Activated CD4-positive, alpha-beta memory T cell treated with anti-CD3 and anti-CD28 coated beads, Interleukin-2, amount 10 ng/mL, durations not matched to agents 7 days and 5 days (primary cell): ENCODE measurements at regions of chr3 and their contacts with region 1.

Region 1: GRCh38 chr3:153161138-153161713 is 800 bp upstream of the RAP2B start:
- DNase-seq: peak; percentile 95
- H3K4me3 Mint-ChIP-seq: peak overlapping the region; percentile 99
- H3K27ac Mint-ChIP-seq: peak overlapping the region; percentile 99
- H3K4me1 Mint-ChIP-seq: peaks cover 32% of the 10 kb centered on the region
- H3K27me3 Mint-ChIP-seq: no peaks in the 10 kb centered on the region

Region 2: DNA sequence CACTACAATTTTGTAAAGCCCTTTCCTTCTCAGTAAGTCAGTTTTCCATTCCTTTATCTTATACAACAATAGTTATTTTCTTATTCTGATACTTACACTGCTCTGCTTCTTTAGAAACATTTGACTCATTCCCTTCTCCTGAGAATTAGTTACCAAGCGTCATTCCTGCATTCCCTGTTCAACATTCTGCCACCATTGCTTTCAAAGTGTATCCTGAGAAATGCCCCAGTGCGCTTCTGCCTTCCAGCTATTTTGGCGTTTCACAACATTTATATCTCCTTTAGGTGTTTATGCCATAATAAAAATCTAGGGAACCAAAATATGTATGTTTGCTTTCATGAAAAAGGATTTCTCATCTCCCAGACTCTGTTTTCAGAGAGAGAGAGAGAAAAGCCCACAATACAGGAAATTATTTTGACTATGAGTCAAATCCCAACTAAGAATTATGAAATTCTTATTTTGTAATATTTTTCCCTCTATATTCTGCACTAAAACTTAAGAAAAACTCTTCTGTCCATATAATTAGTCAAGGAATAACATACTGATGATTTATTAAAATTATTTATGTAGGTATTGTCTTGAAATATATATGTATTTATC is 117.4 kb before region 1 on chr3:
- CTCF ChIA-PET with region 1: interaction called, 28 read pairs
- POLR2A ChIA-PET with region 1: interaction called, 14 read pairs
- DNase-seq: no peak
- H3K4me3 Mint-ChIP-seq: no peak overlapping the region
- H3K27ac Mint-ChIP-seq: no peak overlapping the region
- H3K4me1 Mint-ChIP-seq: peaks cover 11% of the 10 kb centered on the region
- H3K27me3 Mint-ChIP-seq: peaks cover 2% of the 10 kb centered on the region

Region 3: DNA sequence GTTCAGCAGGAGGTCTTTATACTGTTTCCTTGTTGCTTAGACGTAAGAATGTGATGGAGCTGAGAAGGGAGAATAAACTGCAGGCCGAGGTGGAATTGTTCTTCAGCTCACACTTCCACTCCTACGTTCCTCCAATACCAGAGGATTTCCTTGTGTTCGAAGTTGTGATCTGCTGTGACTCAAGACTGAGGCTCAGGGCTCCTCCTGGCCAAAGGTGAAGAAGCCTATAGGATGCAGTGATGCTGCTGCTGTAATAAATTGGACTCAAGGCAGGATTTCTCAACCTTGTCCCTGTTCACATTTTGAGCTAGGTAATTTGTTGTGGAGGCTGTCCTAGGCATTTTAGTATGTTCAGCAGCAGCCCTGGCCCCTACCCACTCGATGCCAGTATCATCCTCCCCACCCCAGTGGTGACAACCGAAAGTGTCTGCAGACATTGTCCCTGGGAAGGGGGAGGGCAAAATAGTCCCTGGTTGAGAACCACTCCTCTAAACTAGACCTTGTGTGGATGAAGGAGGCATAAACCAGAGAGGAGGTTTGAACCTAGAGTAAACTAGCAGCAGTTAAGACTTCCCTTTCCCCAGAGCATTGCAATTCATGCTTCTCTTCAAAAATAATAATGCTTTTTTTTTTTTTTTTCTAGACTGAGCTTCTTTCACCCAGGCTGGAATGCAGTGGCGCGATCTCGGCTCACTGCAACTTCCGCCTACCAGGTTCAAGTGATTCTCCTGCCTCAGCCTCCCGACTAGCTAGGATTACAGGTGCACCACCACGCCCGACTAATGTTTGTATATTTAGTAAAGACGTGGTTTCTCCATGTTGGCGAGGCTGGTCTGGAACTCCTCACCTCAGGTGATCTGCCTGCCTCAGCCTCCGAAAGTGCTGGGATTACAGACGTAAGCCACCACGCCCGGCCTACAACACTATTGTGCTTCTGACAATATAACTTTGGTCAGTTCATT is 11.9 kb after region 1 on chr3:
- CTCF ChIA-PET with region 1: interaction called, 7 read pairs
- POLR2A ChIA-PET with region 1: interaction called, 24 read pairs
- DNase-seq: no peak
- H3K4me3 Mint-ChIP-seq: no peak overlapping the region
- H3K27ac Mint-ChIP-seq: no peak overlapping the region
- H3K4me1 Mint-ChIP-seq: peaks cover 28% of the 10 kb centered on the region
- H3K27me3 Mint-ChIP-seq: no peaks in the 10 kb centered on the region

Region 4: DNA sequence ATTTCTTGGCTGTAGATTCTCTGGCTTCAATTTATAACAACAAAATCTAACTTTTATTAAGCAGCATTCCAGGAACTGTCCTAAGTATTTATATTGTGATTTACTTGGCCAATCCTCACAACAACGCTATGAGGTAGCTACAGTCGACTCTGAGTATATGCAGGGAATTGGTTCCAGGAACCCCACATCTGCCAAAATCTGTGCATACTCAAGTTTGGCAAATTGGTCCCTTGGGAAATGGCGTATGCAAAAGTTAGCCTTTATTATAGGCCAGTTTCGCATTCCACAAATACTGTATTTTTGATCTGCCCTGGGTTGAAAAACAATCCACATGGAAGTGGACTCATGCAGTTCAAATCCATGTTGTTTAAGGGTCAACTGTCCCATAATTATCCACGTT is 54.7 kb after region 1 on chr3:
- CTCF ChIA-PET with region 1: interaction called, 21 read pairs
- POLR2A ChIA-PET with region 1: interaction called, 134 read pairs
- DNase-seq: no peak
- H3K4me3 Mint-ChIP-seq: no peak overlapping the region
- H3K27ac Mint-ChIP-seq: no peak overlapping the region
- H3K4me1 Mint-ChIP-seq: peaks cover 50% of the 10 kb centered on the region
- H3K27me3 Mint-ChIP-seq: no peaks in the 10 kb centered on the region

Region 5: DNA sequence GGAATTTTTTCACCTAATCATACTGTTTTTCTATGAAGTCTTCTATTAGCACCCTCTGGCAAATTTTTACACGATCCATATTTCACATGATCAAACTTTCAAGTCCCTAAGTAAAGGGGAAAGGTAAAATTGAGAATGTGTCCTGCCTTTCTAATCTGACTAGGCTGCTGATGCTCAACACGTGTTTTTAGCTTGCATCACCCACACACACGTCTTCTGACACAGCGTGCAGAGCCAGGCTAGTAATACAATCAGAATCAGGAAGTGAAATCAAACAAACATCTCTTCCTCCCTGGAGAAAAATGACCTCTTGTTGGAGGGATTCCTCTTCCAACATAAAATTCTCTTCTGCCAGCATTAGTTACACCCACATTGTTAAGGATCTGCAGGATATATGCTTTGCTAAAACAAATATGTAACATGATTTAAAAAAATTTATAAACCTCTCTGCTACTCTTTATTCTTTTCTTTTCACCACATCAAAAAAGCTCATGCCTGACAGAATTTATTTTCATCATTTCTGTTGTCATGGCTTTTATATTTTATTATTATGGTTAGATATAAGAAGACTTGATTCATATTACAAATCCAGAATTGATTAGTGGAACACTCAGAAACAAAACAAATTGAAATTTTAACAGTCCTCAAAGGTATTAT is 123.2 kb after region 1 on chr3:
- CTCF ChIA-PET with region 1: interaction called, 9 read pairs
- POLR2A ChIA-PET with region 1: interaction called, 65 read pairs
- DNase-seq: peak; percentile 45
- H3K4me3 Mint-ChIP-seq: no peak overlapping the region
- H3K27ac Mint-ChIP-seq: peak overlapping the region; percentile 67
- H3K4me1 Mint-ChIP-seq: peaks cover 40% of the 10 kb centered on the region
- H3K27me3 Mint-ChIP-seq: no peaks in the 10 kb centered on the region

Region 6: GRCh38 chr3:153621953-153622352 is 460.7 kb after region 1 on chr3:
- CTCF ChIA-PET with region 1: interaction called, 10 read pairs
- POLR2A ChIA-PET with region 1: interaction called, 37 read pairs
- DNase-seq: peak; percentile 31
- H3K4me3 Mint-ChIP-seq: peak overlapping the region; percentile 42
- H3K27ac Mint-ChIP-seq: peak overlapping the region; percentile 77
- H3K4me1 Mint-ChIP-seq: peaks cover 62% of the 10 kb centered on the region
- H3K27me3 Mint-ChIP-seq: no peaks in the 10 kb centered on the region